ENCODE measurements at regions of chr21 and their contacts with region 1.

Region 1: DNA sequence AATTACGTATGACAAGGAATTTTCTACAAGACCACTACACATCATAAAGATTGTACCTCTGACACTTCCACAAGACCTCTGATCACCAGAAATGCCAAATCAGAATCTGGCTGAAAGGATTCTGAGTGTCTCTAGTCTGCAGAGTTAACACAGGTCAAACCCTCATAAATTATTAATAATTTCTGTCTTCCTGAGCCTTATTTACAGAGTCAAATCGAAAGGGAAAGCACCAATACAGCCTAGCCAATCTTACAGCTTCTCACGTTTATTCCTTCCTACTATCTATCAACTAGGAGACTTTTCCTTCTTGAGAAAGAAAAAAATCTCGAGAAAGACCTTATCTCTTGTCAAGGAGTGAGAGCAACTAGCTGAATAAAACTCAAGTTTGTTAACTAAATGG is 2151.6 kb downstream of the MRPL39 start:
- DNase-seq: no peak
- ATAC-seq: peak; percentile 79
- H3K4me3 ChIP-seq: no peak overlapping the region
- H3K27ac ChIP-seq: no peak overlapping the region
- H3K4me1 ChIP-seq: no peaks in the 10 kb centered on the region
- H3K27me3 ChIP-seq: no peaks in the 10 kb centered on the region
- CTCF ChIP-seq: no peak
- EP300 ChIP-seq: no peak
- POLR2A ChIP-seq: no peak
- RAD21 ChIP-seq: no peak

Region 2: DNA sequence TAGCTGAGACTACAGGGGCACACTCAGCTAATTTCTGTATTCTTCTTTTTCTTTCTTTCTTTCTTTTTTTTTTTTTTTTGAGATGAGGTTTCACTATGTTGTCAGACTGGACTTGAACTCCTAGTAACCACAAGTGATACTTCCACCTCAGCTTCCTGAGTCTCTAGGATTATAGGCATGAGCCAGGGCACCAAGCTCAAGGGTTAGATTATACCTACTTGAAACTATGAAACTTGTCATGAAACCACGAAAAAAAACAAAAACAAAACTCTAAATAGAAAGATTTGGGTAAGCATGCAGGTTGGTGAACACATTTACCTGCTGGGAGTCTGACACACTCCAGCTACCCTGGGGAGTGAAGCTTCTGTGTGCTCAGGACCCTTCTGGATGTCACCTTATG is 98.8 kb before region 1 on chr21:
- CTCF ChIA-PET with region 1: no interaction called
- POLR2A ChIA-PET with region 1: no interaction called
- RAD21 ChIA-PET with region 1: no interaction called
- SMC1A ChIA-PET with region 1: no interaction called
- in situ Hi-C with region 1: no loop called
- intact Hi-C with region 1: no loop called
- DNase-seq: no peak
- ATAC-seq: no peak
- H3K4me3 ChIP-seq: no peak overlapping the region
- H3K27ac ChIP-seq: no peak overlapping the region
- H3K4me1 ChIP-seq: no peaks in the 10 kb centered on the region
- H3K27me3 ChIP-seq: no peaks in the 10 kb centered on the region
- CTCF ChIP-seq: no peak
- EP300 ChIP-seq: no peak
- POLR2A ChIP-seq: no peak
- RAD21 ChIP-seq: no peak

Region 3: GRCh38 chr21:23496729-23497128 is 41.1 kb after region 1 on chr21:
- CTCF ChIA-PET with region 1: no interaction called
- POLR2A ChIA-PET with region 1: no interaction called
- RAD21 ChIA-PET with region 1: interaction called, 5 read pairs
- SMC1A ChIA-PET with region 1: interaction called, 3 read pairs
- in situ Hi-C with region 1: no loop called
- intact Hi-C with region 1: loop called (anchors 5 kb)
- DNase-seq: no peak
- ATAC-seq: peak; percentile 75
- H3K4me3 ChIP-seq: no peak overlapping the region
- H3K27ac ChIP-seq: no peak overlapping the region
- H3K4me1 ChIP-seq: no peaks in the 10 kb centered on the region
- H3K27me3 ChIP-seq: no peaks in the 10 kb centered on the region
- CTCF ChIP-seq: no peak
- EP300 ChIP-seq: no peak
- POLR2A ChIP-seq: no peak
- RAD21 ChIP-seq: no peak

Region 4: DNA sequence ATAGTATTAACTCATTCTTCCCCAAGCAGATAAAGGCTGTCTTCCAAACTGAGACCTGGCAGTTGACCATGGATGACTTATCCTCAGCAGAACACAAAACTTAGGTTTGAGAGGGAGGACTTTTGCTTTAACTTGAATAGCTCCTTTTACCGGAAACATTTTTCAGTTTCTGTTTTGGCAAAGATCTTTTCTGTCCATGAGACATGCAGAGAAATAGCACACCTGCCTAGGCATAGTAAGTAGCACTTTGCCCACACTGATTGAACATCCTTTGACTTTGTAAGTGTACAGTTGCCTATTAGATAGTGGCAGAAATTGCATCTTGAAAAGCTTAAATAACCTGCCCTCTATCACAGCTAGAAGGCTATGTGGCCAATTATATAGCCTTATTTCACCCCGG is 189.1 kb after region 1 on chr21:
- CTCF ChIA-PET with region 1: no interaction called
- POLR2A ChIA-PET with region 1: no interaction called
- RAD21 ChIA-PET with region 1: no interaction called
- SMC1A ChIA-PET with region 1: no interaction called
- in situ Hi-C with region 1: no loop called
- intact Hi-C with region 1: no loop called
- DNase-seq: no peak
- ATAC-seq: no peak
- H3K4me3 ChIP-seq: no peak overlapping the region
- H3K27ac ChIP-seq: no peak overlapping the region
- H3K4me1 ChIP-seq: no peaks in the 10 kb centered on the region
- H3K27me3 ChIP-seq: no peaks in the 10 kb centered on the region
- CTCF ChIP-seq: no peak
- EP300 ChIP-seq: no peak
- POLR2A ChIP-seq: no peak
- RAD21 ChIP-seq: no peak